GM10248 (cell line): ENCODE measurements at regions of chr4 and their contacts with region 1.

Region 1: DNA sequence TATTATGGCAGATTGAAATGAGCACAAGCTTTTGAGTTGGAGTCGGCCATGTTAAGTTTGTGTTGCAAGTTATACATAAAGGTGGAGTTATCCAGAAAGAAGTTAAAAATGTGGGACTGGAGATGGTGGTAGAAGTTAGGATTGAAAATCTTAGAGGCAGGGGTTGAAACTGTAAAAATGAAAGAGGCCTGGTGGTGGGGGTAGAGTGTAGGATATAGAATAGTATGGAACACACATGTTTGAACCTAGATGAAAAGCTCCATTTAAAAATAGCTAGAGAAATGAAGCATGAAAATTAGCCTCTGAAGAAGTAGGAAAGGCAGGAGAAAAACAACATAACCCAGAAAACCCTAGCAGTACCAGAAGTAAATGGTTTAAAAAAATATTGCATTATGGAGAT is 131.8 kb upstream of the ENPEP start:
- DNase-seq: no peak
- CTCF ChIP-seq: peak; percentile 10

Region 2: DNA sequence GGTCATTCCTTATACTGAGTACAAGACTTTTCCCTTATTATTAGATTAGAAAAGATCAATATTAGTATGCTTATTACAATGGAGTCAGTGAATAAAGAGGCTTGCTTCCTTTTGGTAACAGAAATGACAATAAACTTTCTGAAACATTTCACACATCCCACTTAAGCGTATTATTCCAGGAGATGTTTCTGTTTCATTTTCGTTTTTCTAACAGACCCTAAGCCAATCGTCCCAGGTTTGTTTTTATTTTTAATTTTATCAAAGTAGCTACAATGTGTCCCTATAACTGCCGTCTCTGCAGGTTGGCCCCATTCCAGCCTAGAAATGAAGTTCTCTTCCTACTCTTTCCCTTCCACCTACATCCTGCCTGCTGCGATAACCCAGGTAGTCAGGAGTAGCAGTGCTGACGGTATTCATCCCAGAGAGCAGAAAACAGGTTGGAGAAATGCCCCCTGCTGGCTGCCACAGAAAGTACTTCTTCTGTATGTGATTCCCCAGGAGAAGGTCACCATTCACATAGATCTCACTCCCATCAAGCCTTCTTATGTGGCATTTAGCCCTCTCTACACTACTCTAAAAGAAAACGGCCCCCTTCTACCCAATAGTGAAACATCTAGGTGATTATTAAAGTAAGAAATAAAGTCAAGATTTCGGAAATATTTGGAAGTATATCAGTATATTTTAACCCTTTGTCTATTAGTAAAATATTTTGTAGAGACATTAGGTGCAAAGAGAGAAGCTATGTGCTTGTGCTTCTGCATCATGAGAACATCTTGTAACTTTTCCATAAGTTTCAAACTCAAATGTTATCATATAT is 172.2 kb after region 1 on chr4:
- CTCF ChIA-PET with region 1: interaction called, 37 read pairs
- POLR2A ChIA-PET with region 1: no interaction called
- DNase-seq: peak; percentile 39
- CTCF ChIP-seq: peak; percentile 79